Activated CD4-positive, alpha-beta memory T cell treated with anti-CD3 and anti-CD28 coated beads, Interleukin-2, amount 10 ng/mL, durations not matched to agents 7 days and 5 days (primary cell): ENCODE measurements at regions of chr10 and their contacts with region 1.

Region 1: GRCh38 chr10:103416436-103417147 is 20.2 kb downstream of the PDCD11 start:
- DNase-seq: peak; percentile 77
- H3K4me3 Mint-ChIP-seq: no peak overlapping the region
- H3K27ac Mint-ChIP-seq: no peak overlapping the region
- H3K4me1 Mint-ChIP-seq: peaks cover 1% of the 10 kb centered on the region
- H3K27me3 Mint-ChIP-seq: no peaks in the 10 kb centered on the region

Region 2: GRCh38 chr10:103273032-103273441 is 143.6 kb before region 1 on chr10:
- CTCF ChIA-PET with region 1: no interaction called
- POLR2A ChIA-PET with region 1: no interaction called
- DNase-seq: no peak
- H3K4me3 Mint-ChIP-seq: no peak overlapping the region
- H3K27ac Mint-ChIP-seq: no peak overlapping the region
- H3K4me1 Mint-ChIP-seq: peaks cover 7% of the 10 kb centered on the region
- H3K27me3 Mint-ChIP-seq: peaks cover 38% of the 10 kb centered on the region

Region 3: DNA sequence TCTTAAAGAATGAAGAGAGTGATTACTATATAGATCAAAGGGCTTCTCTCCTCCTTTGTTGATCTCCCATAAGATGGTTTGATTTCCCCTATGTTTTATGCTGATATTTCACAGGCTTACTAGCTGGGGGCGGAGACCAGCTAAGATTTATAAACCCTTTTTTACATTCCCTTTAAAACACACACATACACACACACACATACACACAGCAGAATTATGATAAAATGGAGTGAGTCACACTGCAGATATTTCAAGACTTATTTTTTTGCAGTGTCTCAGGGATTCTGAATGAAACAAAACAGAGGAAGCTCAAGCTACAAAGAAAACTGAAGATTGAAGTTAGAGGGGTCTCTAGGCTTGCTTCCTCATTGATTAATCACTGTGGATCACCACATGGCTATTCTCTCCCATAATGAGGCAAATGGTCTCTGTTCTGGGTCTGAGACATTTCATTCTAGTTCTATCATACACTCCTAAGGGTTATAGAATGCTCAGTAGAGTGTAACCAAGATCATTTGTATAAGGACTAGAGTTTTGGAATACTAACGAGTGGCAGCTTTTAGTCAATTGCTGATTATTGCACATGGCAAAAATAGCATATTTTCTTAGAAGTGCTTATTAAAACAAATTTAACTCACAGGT is 121.1 kb before region 1 on chr10:
- CTCF ChIA-PET with region 1: no interaction called
- POLR2A ChIA-PET with region 1: no interaction called
- DNase-seq: no peak
- H3K4me3 Mint-ChIP-seq: no peak overlapping the region
- H3K27ac Mint-ChIP-seq: no peak overlapping the region
- H3K4me1 Mint-ChIP-seq: peaks cover 4% of the 10 kb centered on the region
- H3K27me3 Mint-ChIP-seq: peaks cover 5% of the 10 kb centered on the region

Region 4: DNA sequence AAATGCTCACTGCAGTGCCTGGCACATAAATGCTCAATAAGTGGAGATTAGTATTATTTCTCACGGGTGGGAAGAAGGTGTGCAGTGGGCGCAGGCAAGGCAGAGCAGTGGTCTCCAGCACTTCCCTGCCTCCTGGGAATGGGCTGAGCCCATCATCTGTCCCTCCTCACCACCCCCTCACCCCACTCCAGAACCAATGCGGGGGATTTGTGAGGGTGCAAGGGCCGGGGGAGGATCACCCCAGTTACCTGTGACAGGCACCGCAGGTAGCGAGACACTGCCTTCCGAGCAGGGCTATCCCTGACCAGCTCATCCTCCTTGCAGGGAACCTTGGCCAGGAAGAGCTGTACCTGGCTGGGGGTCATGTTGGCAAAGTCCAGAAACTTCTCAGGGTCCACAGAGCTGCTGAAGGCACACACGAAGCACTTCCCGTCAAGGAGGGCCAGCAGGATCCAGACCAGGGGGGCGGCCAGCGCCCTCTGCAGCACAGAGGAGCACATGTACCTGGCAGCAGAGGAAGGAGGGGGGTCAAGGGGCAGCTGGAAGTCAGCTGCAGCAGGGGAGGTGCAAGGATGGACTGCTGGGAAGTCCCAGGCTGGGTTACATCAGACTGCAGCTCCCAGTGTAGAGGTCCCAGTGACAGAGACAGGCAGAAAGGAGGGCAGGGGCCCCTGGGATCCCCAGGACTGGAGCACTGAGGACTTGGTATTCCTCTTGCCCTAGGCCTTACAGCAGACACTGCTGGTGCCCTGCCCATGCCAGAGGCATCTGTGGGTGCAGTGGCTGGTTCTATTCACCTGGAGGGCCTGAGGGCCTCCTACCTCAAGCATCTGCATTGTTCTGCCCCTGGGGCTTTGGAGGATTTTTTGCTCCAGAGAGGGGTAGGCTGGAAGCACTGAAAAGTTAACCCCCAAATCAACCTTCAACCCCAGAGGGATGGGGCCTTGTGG is 59.7 kb after region 1 on chr10:
- CTCF ChIA-PET with region 1: interaction called, 22 read pairs
- POLR2A ChIA-PET with region 1: interaction called, 4 read pairs
- DNase-seq: peak; percentile 46
- H3K4me3 Mint-ChIP-seq: no peak overlapping the region
- H3K27ac Mint-ChIP-seq: peak overlapping the region; percentile 42
- H3K4me1 Mint-ChIP-seq: peaks cover 65% of the 10 kb centered on the region
- H3K27me3 Mint-ChIP-seq: no peaks in the 10 kb centered on the region

Region 5: DNA sequence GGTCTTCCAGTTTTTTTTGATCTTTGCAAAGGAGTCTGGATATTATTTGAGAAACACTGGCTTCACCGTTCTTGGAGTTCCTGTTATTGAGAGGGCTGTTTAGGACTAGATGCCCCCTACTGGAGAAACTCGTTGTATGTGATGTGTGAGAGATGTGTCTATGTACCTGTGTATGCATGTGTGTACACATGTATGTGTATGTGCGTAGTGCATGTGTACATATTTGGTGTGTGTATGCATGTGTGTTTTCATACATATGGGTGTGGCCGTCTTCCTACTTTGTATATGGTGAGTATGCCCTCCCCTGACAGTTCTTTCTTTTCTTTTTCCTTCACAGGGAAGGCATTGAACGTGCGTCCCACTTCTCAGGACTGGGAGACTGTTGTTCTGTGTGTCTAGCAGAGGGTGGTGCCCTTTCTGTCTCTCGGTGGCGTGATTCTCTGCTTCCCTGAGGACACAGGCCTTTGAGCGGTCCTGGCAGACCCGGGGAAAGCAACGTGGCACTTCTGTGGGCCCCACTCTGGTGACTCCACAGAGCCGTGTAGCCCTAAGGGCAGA is 65.5 kb after region 1 on chr10:
- CTCF ChIA-PET with region 1: interaction called, 228 read pairs
- POLR2A ChIA-PET with region 1: interaction called, 8 read pairs
- DNase-seq: peak; percentile 38
- H3K4me3 Mint-ChIP-seq: no peak overlapping the region
- H3K27ac Mint-ChIP-seq: no peak overlapping the region
- H3K4me1 Mint-ChIP-seq: peaks cover 36% of the 10 kb centered on the region
- H3K27me3 Mint-ChIP-seq: peaks cover 3% of the 10 kb centered on the region

Region 6: DNA sequence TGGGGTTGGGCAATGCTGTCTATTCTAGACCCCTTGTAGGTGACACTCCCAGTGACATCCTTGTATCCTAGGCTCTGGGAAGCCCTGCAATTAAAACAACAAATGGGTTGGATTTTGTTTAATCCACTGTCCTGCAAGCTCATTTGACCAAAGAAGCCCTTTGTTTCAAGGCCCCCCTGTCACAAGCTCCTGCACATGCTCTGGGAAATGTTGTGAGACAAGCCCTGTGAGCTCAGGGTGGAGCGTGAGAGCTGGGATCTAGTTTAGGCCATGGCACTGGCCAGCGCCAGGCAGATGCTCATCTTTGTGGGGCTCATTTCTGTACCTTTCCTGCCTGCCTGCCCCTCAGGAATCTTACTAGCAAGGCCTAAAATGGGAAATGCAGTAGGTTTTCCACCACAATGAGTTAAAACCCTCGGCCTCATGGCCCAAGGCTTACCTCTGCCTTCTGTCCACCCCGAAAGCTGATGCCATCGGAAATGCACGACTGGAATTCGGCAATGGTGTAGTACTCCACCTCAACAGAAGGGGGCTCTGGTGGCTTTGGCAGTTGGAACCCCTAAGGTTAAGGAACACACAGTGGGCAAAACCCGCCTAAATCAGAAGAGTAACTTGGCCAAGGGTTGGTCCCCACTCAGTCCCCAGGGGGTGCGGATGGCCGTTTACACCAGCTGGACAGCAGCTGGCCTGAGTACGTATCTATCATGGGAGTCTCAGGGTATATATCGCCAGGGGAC is 188.9 kb after region 1 on chr10:
- CTCF ChIA-PET with region 1: no interaction called
- POLR2A ChIA-PET with region 1: no interaction called
- DNase-seq: peak; percentile 46
- H3K4me3 Mint-ChIP-seq: no peak overlapping the region
- H3K27ac Mint-ChIP-seq: no peak overlapping the region
- H3K4me1 Mint-ChIP-seq: no peaks in the 10 kb centered on the region
- H3K27me3 Mint-ChIP-seq: no peaks in the 10 kb centered on the region